ENCODE measurements at regions of chr11 and their contacts with region 1.

Region 1: DNA sequence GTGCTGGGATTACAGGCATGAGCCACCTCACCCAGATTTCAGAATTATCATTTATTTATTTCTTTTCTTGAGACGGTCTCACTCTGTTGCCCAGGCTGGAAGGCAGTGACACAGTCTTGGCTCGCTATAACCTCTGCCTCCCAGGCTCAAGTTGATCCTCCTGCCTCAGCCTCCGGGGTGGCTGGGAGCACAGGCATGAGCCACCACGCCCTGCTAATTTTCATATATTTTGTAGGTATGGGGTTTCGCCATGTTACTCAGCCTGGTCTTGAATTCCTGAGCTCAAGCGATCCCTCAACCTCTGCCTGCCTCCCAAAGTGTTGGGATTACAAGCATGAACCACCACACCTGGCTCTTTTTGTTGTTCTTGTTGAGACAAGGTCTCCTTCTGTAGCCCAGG is 19.9 kb downstream of the CRTAM start:
- DNase-seq: no peak

Region 2: GRCh38 chr11:122628810-122629555 is 229.2 kb before region 1 on chr11:
- intact Hi-C with region 1: loop called (anchors 5 kb)
- DNase-seq: peak; percentile 48 to 88 (median 76)

Measured in head of caudate nucleus (tissue), 42 donors.